ENCODE measurements at regions of chr2 and their contacts with region 1.

Region 1: GRCh38 chr2:36355151-36355889 is at the start of gene CRIM1:
- DNase-seq: peak; percentile 52
- H3K4me3 Mint-ChIP-seq: peak within 1 kb of the TSS; percentile 73
- H3K27ac Mint-ChIP-seq: no peak within 1 kb of the TSS
- H3K4me1 Mint-ChIP-seq: peaks cover 25% of the 10 kb centered on the region
- H3K27me3 Mint-ChIP-seq: peaks cover 34% of the 10 kb centered on the region
- total RNA-seq, gene CRIM1: 3.1 to 3.3 TPM

Region 2: DNA sequence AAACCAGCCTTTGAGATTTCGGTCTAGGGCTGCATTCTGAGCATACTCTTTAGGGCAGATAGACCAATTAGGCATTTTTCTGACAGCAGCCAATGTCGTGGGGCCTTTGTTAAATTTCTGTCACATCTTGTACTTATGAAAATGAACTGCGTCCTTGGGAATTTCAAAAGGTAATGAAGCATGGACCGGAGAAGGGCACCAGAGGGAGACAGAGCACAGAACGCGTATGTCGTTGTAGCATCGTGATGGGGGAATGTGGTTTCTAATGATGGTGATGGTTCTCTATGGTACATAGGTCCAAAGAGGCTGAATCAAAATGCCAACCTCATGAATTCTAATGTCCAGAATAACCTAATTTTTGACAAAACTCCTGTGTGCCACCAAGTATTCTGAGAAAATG is 483.6 kb before region 1 on chr2:
- CTCF ChIA-PET with region 1: interaction called, 3 read pairs
- intact Hi-C with region 1: loop called (anchors 5 kb)
- DNase-seq: no peak
- H3K4me3 Mint-ChIP-seq: no peak overlapping the region
- H3K27ac Mint-ChIP-seq: no peak overlapping the region
- H3K4me1 Mint-ChIP-seq: no peaks in the 10 kb centered on the region
- H3K27me3 Mint-ChIP-seq: peaks cover 7% of the 10 kb centered on the region

Region 3: DNA sequence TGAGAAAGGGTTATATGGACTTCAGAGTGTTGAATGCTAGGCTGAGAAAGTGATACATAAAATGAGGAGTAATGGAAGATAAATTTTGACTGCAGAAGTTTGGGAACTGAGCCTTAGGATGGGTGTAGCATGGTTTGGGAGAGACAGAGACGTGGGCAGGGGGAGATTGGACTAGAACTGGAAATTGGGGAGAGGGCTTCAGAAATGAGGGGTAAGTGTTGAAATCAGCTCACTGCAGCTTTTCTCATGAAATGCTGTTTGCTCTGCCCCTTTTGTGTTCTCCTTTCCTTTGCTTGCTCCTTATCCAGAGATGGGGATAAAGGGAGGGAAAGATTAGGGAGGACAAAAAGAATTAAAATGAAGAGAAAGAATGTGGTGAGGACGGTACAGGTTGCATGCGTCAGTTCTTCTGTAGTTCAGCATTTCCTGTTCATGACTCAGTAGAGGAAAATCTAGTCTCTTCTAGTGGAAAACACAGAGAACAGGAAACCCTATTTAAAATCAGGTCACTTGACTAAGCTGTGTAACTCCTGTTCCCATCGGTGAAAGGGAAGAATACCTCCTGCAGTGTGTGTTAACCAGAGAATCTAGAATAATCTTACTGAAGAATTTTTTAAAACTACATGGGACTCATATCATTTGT is 105.8 kb after region 1 on chr2:
- CTCF ChIA-PET with region 1: no interaction called
- intact Hi-C with region 1: loop called (anchors 1 kb)
- DNase-seq: no peak
- H3K4me3 Mint-ChIP-seq: no peak overlapping the region
- H3K27ac Mint-ChIP-seq: no peak overlapping the region
- H3K4me1 Mint-ChIP-seq: no peaks in the 10 kb centered on the region
- H3K27me3 Mint-ChIP-seq: no peaks in the 10 kb centered on the region

Region 4: DNA sequence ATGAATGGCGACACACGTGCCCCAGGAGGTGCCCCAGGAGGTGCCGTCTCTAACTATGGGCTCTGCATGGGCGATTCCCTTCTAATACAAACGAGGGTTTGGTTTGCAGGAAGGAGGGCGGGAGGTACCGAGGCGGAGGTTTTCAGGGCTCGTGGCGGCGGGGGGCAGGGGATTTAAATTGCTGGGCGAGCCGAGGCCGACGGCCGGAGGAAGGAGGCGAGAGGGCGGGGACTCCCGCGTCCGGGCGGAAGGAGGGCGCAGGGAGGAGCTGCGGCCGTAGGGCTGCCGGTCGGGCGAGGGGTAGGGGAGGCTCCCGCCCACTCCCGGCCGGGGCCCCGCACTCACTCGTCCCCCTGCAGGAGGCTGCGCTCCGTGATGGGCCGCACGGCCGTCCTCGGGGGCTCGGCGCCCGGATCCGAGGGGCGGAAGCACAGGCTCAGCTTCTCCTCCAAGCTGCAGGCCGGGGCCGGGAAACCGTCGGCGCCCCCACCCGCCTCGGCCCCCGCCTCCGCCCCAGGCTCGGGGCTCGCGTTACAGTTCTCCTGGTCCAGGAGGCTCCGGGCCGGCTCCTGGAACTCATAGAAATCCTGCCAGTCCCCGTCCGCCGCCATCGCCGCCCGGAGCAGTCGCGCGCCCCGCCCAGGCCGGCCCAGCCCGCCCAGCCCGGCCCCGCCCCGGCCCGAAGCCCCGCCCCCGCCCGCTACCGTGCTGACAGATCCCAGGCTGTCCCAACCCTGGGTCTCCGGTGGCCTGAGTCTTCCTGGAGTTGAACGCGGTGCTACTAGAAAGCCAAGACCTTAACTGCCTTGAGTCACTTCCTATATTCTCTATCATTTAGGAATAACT is 242.4 kb after region 1 on chr2 and contains the start of gene FEZ2:
- CTCF ChIA-PET with region 1: no interaction called
- intact Hi-C with region 1: loop called (anchors 1 kb)
- DNase-seq: peak; percentile 69
- H3K4me3 Mint-ChIP-seq: peak within 1 kb of the TSS; percentile 90
- H3K27ac Mint-ChIP-seq: peak within 1 kb of the TSS; percentile 80
- H3K4me1 Mint-ChIP-seq: peaks cover 21% of the 10 kb centered on the region
- H3K27me3 Mint-ChIP-seq: no peaks in the 10 kb centered on the region
- total RNA-seq, gene FEZ2: 6.5 to 8.2 TPM

Region 5: DNA sequence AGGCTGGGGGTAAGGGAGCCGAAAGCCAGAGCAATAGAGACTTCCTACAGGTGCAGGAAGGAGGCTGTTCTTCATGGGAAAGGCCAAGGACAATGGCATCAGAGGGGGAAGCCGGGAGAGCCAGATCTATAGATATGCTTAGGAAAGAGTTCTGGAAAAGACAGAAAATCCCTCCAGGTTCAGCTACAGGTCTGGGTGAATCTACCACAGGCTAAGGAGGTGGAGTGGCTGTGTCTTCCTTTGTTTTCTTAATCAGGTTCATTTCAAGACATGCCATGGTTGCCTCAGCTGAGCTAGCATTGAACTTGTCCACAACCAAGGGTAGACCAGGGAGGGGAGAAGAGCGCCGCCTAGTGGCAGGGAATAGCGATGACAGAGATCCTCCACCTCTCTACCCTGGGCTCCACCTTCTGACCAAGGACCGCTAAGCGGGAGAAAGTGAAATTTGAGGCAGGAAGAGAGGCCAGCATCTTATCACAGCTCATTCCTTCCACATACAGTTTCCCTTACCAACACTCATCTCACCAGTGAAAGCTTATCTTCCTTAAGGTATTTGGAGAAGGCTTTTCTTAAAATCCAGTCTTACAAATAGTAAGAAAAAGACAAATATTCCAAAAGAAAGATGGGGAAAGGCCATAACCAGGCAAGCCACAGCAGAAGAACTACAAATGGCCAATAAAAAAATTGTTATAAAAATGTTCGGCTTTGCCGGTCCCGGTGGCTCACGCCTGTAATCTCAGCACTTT is 415.4 kb after region 1 on chr2:
- CTCF ChIA-PET with region 1: interaction called, 3 read pairs
- intact Hi-C with region 1: loop called (anchors 1 kb)
- DNase-seq: peak; percentile 67
- H3K4me3 Mint-ChIP-seq: no peak overlapping the region
- H3K27ac Mint-ChIP-seq: no peak overlapping the region
- H3K4me1 Mint-ChIP-seq: no peaks in the 10 kb centered on the region
- H3K27me3 Mint-ChIP-seq: peaks cover 3% of the 10 kb centered on the region

Region 6: DNA sequence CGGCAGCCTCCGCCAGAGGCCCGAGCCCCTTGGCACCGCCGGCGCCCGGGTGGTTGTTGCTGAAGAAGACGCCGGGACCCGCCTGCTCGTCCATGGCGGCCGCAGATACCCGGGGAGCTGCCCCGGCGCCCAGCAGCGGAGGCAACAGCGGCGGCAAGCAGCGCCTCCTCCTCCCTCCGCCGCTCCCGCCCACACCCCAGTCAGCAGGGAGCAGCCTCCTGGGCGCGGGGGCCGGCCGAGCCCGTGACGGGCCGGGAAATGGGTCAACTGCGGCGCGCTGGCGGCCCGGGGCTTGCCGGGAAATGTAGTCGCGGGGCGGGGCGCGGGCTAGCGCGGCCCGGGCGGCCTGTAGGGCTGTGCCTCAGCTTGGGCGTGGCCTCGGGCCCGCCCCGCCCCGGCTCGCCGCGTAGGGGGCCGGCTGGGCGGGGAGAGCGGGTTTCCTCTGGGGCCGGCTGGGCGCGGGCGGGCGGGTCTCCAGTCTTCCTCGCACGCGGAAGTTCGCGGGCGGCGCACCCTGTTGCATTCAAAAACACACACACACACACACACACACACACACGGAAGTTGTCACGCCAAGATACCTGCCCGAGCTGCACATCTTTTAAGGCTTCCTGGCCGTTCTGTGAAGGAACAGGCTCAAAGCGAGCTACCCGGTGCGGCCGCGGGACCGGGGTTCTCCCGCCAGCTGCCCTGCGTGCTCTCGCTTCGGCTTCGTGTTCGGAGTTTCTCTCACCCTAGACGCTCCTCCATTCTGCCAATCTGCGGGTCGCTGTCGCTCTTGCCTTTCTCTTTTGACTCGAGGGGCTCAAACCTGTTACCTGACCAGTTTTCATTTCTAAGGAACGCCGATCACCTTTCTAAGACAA is 611.3 kb after region 1 on chr2 and contains the start of gene STRN:
- CTCF ChIA-PET with region 1: no interaction called
- intact Hi-C with region 1: loop called (anchors 2 kb)
- DNase-seq: peak; percentile 96
- H3K4me3 Mint-ChIP-seq: peak within 1 kb of the TSS; percentile 94
- H3K27ac Mint-ChIP-seq: peak within 1 kb of the TSS; percentile 90
- H3K4me1 Mint-ChIP-seq: peaks cover 33% of the 10 kb centered on the region
- H3K27me3 Mint-ChIP-seq: no peaks in the 10 kb centered on the region
- total RNA-seq, gene STRN: 19.3 to 22.2 TPM